ENCODE measurements at regions of chr1 and their contacts with region 1.

Region 1: GRCh38 chr1:177525176-177525575 is 354.4 kb downstream of the BRINP2 start:
- DNase-seq: no peak
- ATAC-seq: no peak
- H3K4me3 ChIP-seq: no peak overlapping the region
- H3K27ac ChIP-seq: no peak overlapping the region
- H3K4me1 ChIP-seq: no peaks in the 10 kb centered on the region
- H3K27me3 ChIP-seq: no peaks in the 10 kb centered on the region
- CTCF ChIP-seq: no peak
- EP300 ChIP-seq: no peak
- POLR2A ChIP-seq: no peak
- RAD21 ChIP-seq: no peak

Region 2: GRCh38 chr1:176720838-176721237 is 804.3 kb before region 1 on chr1:
- CTCF ChIA-PET with region 1: no interaction called
- POLR2A ChIA-PET with region 1: no interaction called
- in situ Hi-C with region 1: no loop called
- intact Hi-C with region 1: loop called (anchors 5 kb)
- DNase-seq: no peak
- ATAC-seq: no peak
- H3K4me3 ChIP-seq: no peak overlapping the region
- H3K27ac ChIP-seq: no peak overlapping the region
- H3K4me1 ChIP-seq: no peaks in the 10 kb centered on the region
- H3K27me3 ChIP-seq: no peaks in the 10 kb centered on the region
- CTCF ChIP-seq: no peak
- EP300 ChIP-seq: no peak
- POLR2A ChIP-seq: no peak
- RAD21 ChIP-seq: no peak

Region 3: DNA sequence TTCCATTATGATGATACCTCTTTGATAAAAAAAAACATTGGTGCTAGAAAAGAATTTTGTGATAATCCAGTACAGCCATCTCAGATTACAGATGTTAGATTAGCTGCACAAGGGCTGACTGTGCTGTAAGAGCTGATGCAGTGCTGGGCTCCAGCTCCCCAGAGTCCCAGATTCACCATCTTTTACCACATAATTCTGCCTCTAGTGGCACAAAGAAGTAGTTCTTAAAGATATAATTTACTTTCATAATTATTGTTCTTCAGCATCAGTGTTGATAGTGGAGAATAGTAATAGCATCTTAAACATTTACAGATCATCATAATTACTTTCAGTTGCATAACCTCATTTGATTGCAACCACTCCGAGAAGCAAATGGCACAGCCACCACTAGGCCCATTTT is 92.3 kb before region 1 on chr1:
- CTCF ChIA-PET with region 1: no interaction called
- POLR2A ChIA-PET with region 1: no interaction called
- in situ Hi-C with region 1: no loop called
- intact Hi-C with region 1: no loop called
- DNase-seq: no peak
- ATAC-seq: no peak
- H3K4me3 ChIP-seq: no peak overlapping the region
- H3K27ac ChIP-seq: no peak overlapping the region
- H3K4me1 ChIP-seq: no peaks in the 10 kb centered on the region
- H3K27me3 ChIP-seq: no peaks in the 10 kb centered on the region; a peak in 1 of 5 replicates
- CTCF ChIP-seq: no peak
- EP300 ChIP-seq: no peak
- POLR2A ChIP-seq: no peak
- RAD21 ChIP-seq: no peak

Measured in HepG2 (cell line).